Endothelial cell of umbilical vein (primary cell): ENCODE measurements at regions of chr9 and their contacts with region 1.

Region 1: DNA sequence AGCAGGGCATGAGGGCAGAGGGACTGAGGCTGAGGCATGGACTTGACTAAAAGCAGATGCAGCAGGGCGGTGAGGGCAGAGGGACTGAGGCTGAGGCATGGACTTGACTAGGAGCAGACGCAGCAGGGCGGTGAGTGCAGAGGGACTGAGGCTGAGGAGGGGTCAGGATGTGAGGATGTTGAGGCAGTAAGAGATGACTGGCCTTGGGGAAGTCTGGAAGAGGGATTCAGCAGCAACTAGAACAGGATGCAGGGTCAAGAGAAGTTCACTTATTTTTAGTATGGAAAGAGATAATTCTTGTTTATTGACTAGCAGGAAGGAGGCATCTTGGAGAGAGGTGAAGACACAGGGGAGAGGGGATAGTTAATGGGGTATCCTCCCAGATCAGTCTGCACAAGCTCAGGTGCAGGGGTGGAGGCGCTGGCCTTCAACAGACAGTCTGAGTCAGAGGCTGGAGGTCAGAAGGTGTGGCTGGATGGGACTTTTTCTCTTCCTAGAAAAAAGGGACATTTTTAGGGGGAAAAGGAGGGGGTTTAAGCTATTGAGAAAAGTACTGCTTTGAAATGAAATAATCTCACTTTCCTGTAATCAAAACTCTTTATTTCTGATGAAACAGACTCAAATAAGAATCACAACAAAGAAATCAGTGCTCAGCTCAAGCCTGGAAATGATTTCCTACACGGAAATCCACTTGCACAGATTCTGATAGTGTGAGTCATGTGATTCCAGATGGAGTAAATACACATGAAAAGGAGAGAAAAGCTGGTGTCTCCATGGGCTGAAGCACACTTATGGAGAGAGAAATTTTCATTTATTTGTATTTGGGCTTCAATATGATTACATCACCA is 130.9 kb downstream of the PALM2AKAP2 start:
- DNase-seq: peak; percentile 88
- H3K4me3 ChIP-seq: peak overlapping the region in 1 of 3 experiments; percentile 7
- H3K27ac ChIP-seq: peak overlapping the region; percentile 100
- H3K4me1 ChIP-seq: peaks cover 73% of the 10 kb centered on the region
- H3K27me3 ChIP-seq: no peaks in the 10 kb centered on the region
- CTCF ChIP-seq: no peak
- POLR2A ChIP-seq: no peak

Region 2: DNA sequence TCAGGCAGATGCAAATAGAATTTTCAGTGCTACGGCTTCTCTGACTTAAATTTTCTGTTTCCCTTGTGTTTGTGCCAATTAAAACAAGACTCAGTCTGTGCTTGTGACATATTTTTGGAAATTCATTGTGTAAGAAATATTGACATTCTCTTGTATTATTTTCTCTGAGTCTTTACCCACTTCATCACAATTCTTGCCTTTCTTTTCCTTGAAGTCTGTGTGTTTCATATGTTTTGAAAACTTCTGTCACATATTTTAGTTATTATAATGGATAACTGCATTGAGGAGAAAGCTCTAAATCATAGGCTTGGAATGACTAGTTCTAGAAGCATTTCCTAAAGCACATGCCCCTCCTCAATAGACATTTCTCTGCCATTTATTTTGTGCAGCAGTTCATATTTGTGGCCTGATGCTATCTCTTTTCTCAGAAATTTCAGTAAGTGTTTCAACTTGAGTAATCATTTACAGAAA is 75.7 kb after region 1 on chr9:
- CTCF ChIA-PET with region 1: interaction called, 6 read pairs
- POLR2A ChIA-PET with region 1: interaction called, 5 read pairs
- dilution Hi-C with region 1: no loop called
- intact Hi-C with region 1: loop called (anchors 1 kb)
- DNase-seq: peak; percentile 95
- H3K4me3 ChIP-seq: peak overlapping the region in 1 of 3 experiments; percentile 10
- H3K27ac ChIP-seq: peak overlapping the region; percentile 93
- H3K4me1 ChIP-seq: peaks cover 22% of the 10 kb centered on the region
- H3K27me3 ChIP-seq: no peaks in the 10 kb centered on the region
- CTCF ChIP-seq: no peak
- POLR2A ChIP-seq: no peak

Region 3: DNA sequence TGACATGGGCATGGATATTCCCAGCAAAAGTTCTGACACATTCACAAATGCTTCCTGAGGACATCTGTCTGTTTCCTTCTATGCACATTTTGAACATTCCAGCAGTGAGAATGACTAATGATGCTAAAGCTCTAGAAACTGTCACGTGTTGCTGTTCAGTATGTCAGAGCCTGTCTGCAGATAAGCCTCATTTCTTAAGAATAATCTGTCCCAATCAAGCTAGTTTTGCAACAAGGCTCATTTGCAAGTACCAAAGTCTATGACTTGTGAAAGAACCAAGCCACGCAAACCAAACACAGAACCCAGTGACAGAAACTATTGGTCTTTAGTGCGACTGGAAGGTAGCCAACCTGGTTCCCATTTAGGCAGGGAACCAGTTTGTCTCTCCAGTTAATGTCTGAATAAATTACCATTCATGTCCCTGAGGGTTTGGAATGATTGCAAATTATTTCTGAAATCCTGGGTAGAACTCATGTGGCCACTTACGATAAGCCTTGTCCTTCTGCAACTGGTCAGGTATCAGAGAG is 118.6 kb after region 1 on chr9:
- CTCF ChIA-PET with region 1: interaction called, 25 read pairs
- POLR2A ChIA-PET with region 1: interaction called, 8 read pairs
- dilution Hi-C with region 1: no loop called
- intact Hi-C with region 1: loop called (anchors 1 kb)
- DNase-seq: peak; percentile 91
- H3K4me3 ChIP-seq: peak overlapping the region in 1 of 3 experiments; percentile 1
- H3K27ac ChIP-seq: peak overlapping the region; percentile 97
- H3K4me1 ChIP-seq: peaks cover 57% of the 10 kb centered on the region
- H3K27me3 ChIP-seq: no peaks in the 10 kb centered on the region
- CTCF ChIP-seq: no peak
- POLR2A ChIP-seq: peak; percentile 63

Region 4: GRCh38 chr9:110058304-110058953 is 147.5 kb after region 1 on chr9:
- CTCF ChIA-PET with region 1: interaction called, 34 read pairs
- POLR2A ChIA-PET with region 1: interaction called, 13 read pairs
- dilution Hi-C with region 1: loop called (anchors 10 kb)
- intact Hi-C with region 1: no loop called
- DNase-seq: peak; percentile 82
- H3K4me3 ChIP-seq: no peak overlapping the region
- H3K27ac ChIP-seq: peak overlapping the region; percentile 30
- H3K4me1 ChIP-seq: peaks cover 30% of the 10 kb centered on the region
- H3K27me3 ChIP-seq: no peaks in the 10 kb centered on the region
- CTCF ChIP-seq: peak; percentile 37 to 46
- POLR2A ChIP-seq: peak; percentile 31

Region 5: DNA sequence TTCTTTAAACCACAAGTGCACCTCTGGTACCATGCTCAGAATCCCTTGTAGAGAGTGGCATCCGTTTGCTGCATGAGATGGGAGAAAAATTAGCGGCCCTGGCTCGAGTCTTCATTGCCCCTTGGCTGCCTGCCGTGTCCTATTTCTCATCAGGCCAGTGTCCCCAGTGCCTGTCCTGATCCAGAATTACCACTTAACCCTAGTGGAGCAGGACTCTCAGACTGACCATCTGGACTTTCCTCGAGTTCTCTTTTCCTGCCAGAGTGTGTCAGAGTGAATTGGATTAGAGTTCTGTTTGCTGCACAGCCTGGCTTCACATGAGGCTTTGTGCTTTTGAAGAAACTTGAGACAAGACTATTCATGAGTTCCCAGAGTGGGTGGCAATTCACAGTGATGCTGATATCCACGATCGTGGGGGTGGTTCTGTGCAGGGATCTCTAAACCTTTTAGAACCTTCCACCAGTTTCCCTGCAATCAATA is 204.5 kb after region 1 on chr9:
- CTCF ChIA-PET with region 1: no interaction called
- POLR2A ChIA-PET with region 1: interaction called, 3 read pairs
- dilution Hi-C with region 1: no loop called
- intact Hi-C with region 1: loop called (anchors 1 kb)
- DNase-seq: peak; percentile 59
- H3K4me3 ChIP-seq: no peak overlapping the region
- H3K27ac ChIP-seq: peak overlapping the region; percentile 36
- H3K4me1 ChIP-seq: peaks cover 28% of the 10 kb centered on the region
- H3K27me3 ChIP-seq: no peaks in the 10 kb centered on the region
- CTCF ChIP-seq: no peak
- POLR2A ChIP-seq: no peak